ENCODE measurements at regions of chr5 and their contacts with region 1.

Region 1: GRCh38 chr5:91383027-91383955 is at the start of gene ARRDC3:
- DNase-seq: peak; percentile 85 to 98
- H3K4me3 ChIP-seq: peak within 1 kb of the TSS; percentile 75 to 86
- H3K27ac ChIP-seq: peak within 1 kb of the TSS; percentile 95 to 98
- H3K4me1 ChIP-seq: peaks cover 4 to 8% of the 10 kb centered on the region in 2 donors
- H3K27me3 ChIP-seq: no peaks in the 10 kb centered on the region
- CTCF ChIP-seq: peak in 1 of 3 experiments; percentile 4
- total RNA-seq, gene ARRDC3: 30.1 TPM

Region 2: DNA sequence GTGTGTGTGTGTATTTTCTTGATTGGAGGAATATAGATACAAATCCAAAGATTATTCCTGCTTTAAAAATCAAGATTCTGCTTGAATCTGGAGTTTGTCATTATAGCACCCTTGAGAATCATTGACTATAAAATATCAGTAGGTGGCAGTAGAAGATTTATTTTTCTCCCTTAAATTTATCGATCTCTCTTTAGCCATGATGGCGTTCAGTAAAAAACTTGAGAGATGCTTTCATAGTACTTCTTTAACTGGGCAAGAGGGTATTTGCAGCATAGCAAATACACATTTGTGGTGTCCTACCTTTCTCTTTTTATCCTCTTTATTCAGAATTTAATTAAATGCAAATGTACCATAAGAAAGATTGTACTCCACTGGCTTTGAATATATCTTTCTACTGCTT is 517.0 kb before region 1 on chr5:
- intact Hi-C with region 1: loop called (anchors 2 kb)
- DNase-seq: no peak
- H3K4me3 ChIP-seq: peak overlapping the region in 1 of 2 donors; percentile 42
- H3K27ac ChIP-seq: no peak overlapping the region
- H3K4me1 ChIP-seq: no peaks in the 10 kb centered on the region
- H3K27me3 ChIP-seq: no peaks in the 10 kb centered on the region
- CTCF ChIP-seq: peak; percentile 34 to 56 (median 50)

Region 3: GRCh38 chr5:91061946-91062562 is 321.2 kb before region 1 on chr5:
- intact Hi-C with region 1: loop called (anchors 5 kb)
- DNase-seq: no peak
- H3K4me3 ChIP-seq: no peak overlapping the region
- H3K27ac ChIP-seq: no peak overlapping the region
- H3K4me1 ChIP-seq: peaks cover 0 to 8% of the 10 kb centered on the region in 2 donors
- H3K27me3 ChIP-seq: no peaks in the 10 kb centered on the region
- CTCF ChIP-seq: no peak

Region 4: GRCh38 chr5:91280362-91281269 is 102.7 kb before region 1 on chr5:
- intact Hi-C with region 1: loop called (anchors 1 kb)
- DNase-seq: peak; percentile 73 to 94
- H3K4me3 ChIP-seq: peak overlapping the region; percentile 60 to 72
- H3K27ac ChIP-seq: peak overlapping the region; percentile 77 to 85
- H3K4me1 ChIP-seq: peaks cover 0 to 7% of the 10 kb centered on the region in 2 donors
- H3K27me3 ChIP-seq: no peaks in the 10 kb centered on the region
- CTCF ChIP-seq: no peak

Region 5: GRCh38 chr5:91311697-91312501 is 71.4 kb before region 1 on chr5:
- intact Hi-C with region 1: loop called (anchors 1 kb)
- DNase-seq: peak; percentile 62 to 93
- H3K4me3 ChIP-seq: no peak overlapping the region
- H3K27ac ChIP-seq: peak overlapping the region; percentile 59 to 85
- H3K4me1 ChIP-seq: peaks cover 0 to 18% of the 10 kb centered on the region in 2 donors
- H3K27me3 ChIP-seq: no peaks in the 10 kb centered on the region
- CTCF ChIP-seq: peak in 1 of 3 experiments; percentile 11

Region 6: DNA sequence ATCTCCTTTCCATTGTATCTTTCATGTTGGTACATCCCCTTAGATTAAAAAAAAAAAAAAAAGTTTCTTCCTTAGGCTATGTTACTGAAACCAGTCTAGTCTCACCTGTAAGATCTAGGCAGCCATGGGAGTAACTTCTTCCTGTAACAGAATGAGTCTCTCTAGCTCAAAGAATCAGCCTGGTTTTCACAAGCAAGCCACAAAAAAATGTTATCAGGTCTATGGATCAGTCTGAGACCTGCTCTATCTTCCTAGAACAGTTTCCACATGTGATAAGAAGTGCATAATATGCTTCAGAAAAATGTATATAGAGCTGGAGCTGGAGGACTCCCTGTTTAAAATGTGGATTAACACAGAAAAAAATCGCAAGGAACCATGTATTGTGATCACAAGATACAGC is 54.0 kb before region 1 on chr5:
- intact Hi-C with region 1: no loop called
- DNase-seq: no peak
- H3K4me3 ChIP-seq: no peak overlapping the region
- H3K27ac ChIP-seq: no peak overlapping the region
- H3K4me1 ChIP-seq: no peaks in the 10 kb centered on the region
- H3K27me3 ChIP-seq: no peaks in the 10 kb centered on the region
- CTCF ChIP-seq: no peak

Region 7: GRCh38 chr5:92242170-92242569 is 858.9 kb after region 1 on chr5:
- intact Hi-C with region 1: no loop called
- DNase-seq: no peak
- H3K4me3 ChIP-seq: no peak overlapping the region
- H3K27ac ChIP-seq: no peak overlapping the region
- H3K4me1 ChIP-seq: no peaks in the 10 kb centered on the region
- H3K27me3 ChIP-seq: no peaks in the 10 kb centered on the region
- CTCF ChIP-seq: no peak